ENCODE measurements at regions of chr16 and their contacts with region 1.

Region 1: GRCh38 chr16:69294051-69294450 is 17.1 kb upstream of the VPS4A start:
- DNase-seq: no peak
- H3K4me3 ChIP-seq: no peak overlapping the region
- H3K27ac ChIP-seq: no peak overlapping the region
- H3K4me1 ChIP-seq: no peaks in the 10 kb centered on the region
- H3K27me3 ChIP-seq: no peaks in the 10 kb centered on the region
- CTCF ChIP-seq: no peak
- EP300 ChIP-seq: no peak
- POLR2A ChIP-seq: no peak

Region 2: GRCh38 chr16:68873635-68874471 is 420.2 kb before region 1 on chr16:
- intact Hi-C with region 1: loop called in 1 of 4 experiments (anchors 10 kb)
- DNase-seq: no peak
- H3K4me3 ChIP-seq: no peak overlapping the region
- H3K27ac ChIP-seq: no peak overlapping the region
- H3K4me1 ChIP-seq: no peaks in the 10 kb centered on the region
- H3K27me3 ChIP-seq: no peaks in the 10 kb centered on the region
- CTCF ChIP-seq: no peak
- EP300 ChIP-seq: no peak
- POLR2A ChIP-seq: no peak

Region 3: DNA sequence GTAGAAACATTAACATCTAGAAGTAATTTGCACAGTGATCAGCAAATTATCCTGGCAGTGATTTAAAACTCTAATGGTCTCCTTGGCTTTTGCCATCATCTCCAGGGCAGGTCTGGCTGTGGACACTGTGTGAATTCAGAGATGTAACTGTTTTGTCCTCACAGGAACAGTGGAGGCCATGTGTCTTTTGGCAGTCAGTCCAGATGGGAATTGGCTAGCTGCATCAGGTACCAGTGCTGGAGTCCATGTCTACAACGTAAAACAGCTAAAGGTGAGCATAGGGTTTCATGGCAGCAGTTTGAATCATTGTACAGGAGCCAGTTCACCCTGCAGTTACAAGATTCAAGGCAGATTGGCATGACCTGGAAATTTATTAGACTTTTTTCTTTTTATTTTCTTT is 133.9 kb before region 1 on chr16:
- intact Hi-C with region 1: loop called in 1 of 4 experiments (anchors 5 kb)
- DNase-seq: no peak
- H3K4me3 ChIP-seq: no peak overlapping the region
- H3K27ac ChIP-seq: no peak overlapping the region
- H3K4me1 ChIP-seq: no peaks in the 10 kb centered on the region
- H3K27me3 ChIP-seq: no peaks in the 10 kb centered on the region
- CTCF ChIP-seq: no peak
- EP300 ChIP-seq: no peak
- POLR2A ChIP-seq: no peak

Measured in ovary (tissue), 10 donors.